ENCODE measurements at regions of chr12 and their contacts with region 1.

Region 1: DNA sequence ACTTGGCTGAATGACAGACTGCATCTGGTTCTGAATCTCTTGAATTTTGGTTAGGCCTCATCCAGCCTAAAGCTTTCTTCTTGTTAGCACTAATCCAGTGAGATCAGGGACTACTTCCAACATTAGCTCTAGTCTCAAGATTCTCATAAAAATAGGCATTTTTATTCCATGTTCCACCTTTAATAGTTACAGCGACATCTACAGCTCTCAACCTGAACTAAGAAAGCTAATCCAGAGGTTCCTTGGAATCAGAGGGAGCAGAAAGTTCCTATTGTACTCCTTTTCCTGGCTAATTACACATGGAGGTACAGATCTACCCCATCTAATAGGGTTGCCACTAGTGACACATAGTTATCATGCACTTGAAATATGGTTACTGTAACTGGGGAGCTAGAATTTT is 391.9 kb downstream of the RMST start:
- DNase-seq: no peak
- H3K4me3 ChIP-seq: no peak overlapping the region
- H3K27ac ChIP-seq: no peak overlapping the region
- H3K4me1 ChIP-seq: no peaks in the 10 kb centered on the region
- H3K27me3 ChIP-seq: no peaks in the 10 kb centered on the region
- CTCF ChIP-seq: peak; percentile 43; the same call in 1 of the 2 replicates

Region 2: DNA sequence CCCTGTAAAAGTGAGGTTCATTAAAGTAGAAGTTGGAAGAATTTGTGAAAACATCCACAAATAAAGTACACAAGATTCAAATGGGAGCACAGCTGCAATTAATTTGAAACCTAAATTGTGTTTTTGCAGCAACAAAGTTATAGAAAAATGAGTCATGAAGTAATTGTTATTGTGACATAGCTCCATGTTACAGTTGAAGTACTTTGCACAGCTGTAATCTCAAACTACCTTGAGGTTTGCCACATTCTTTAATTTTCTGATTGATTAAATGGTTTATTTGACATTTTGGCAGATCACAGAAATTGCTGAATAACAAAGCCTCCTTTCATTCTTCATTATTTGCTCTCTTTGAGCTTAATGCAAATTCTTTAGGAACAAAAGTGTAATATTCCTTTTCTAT is 280.6 kb before region 1 on chr12:
- CTCF ChIA-PET with region 1: no interaction called
- POLR2A ChIA-PET with region 1: interaction called, 10 read pairs
- intact Hi-C with region 1: no loop called
- DNase-seq: peak in 1 of 2 experiments; percentile 40
- H3K4me3 ChIP-seq: no peak overlapping the region
- H3K27ac ChIP-seq: no peak overlapping the region
- H3K4me1 ChIP-seq: peaks cover 56% of the 10 kb centered on the region
- H3K27me3 ChIP-seq: no peaks in the 10 kb centered on the region
- CTCF ChIP-seq: no peak

Region 3: DNA sequence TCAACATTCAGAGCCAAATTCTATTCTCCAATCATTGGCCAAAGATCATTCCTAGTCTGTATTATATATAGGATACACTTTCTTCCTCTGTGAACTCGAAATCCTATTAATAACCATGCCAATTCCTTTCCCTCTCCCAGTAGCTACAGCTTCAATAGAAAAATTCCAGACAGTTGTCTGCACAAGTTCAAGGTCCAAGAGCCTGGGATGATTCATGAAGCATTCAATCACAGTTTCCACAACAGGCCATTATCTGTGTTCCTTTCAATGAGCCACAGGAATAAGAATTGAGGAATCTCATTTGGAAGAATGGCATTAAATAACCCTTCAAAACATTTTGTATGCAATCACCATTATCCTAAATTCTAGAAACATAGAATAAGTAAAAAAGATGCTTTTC is 45.5 kb after region 1 on chr12:
- CTCF ChIA-PET with region 1: no interaction called
- POLR2A ChIA-PET with region 1: no interaction called
- intact Hi-C with region 1: no loop called
- DNase-seq: no peak
- H3K4me3 ChIP-seq: no peak overlapping the region
- H3K27ac ChIP-seq: no peak overlapping the region
- H3K4me1 ChIP-seq: no peaks in the 10 kb centered on the region
- H3K27me3 ChIP-seq: no peaks in the 10 kb centered on the region
- CTCF ChIP-seq: no peak

Measured in PC-9 (cell line).